HepG2 (cell line): ENCODE measurements at regions of chr1 and their contacts with region 1.

Region 1: DNA sequence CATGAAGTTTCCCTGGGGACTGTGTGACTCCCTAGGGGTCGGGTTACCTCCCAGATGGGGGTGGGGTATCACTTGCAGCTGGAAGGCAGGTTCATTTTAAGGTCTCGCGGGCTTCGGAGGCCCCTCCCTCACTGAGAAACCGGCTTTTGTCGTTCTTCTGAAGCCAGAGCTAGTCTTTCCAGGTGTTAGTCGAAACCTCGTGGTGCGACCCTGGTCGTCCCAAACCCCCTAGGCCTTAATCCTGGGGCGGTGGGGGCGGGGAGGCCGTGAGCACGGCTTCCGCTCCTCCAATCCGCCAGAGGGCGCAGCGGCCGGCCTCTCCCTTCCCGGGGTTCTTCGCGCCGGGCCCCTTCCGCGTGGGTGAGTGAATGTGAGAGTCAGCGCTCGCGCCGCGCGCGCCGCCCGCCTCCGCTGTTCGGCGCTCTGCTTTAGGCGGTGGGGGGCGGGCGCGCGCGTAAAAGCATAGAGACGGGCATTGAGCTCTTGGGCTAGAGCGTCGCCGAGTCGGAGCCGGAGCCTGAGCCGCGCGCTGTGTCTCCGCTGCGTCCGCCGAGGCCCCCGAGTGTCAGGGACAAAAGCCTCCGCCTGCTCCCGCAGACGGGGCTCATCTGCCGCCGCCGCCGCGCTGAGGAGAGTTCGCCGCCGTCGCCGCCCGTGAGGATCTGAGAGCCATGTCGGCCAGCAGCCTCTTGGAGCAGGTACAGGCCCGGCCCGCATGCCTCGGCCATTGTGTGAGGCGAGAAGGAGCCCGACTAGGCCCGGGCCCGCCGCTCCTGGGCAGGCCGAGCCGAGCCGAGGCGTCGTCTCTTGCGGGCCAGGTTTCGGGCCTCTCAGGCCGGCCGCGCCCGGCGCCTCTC is at the start of gene YTHDF2:
- DNase-seq: peak; percentile 96
- ATAC-seq: peak; percentile 88
- H3K4me3 ChIP-seq: peak within 1 kb of the TSS; percentile 75 to 95 (median 89)
- H3K27ac ChIP-seq: peak within 1 kb of the TSS; percentile 97
- H3K4me1 ChIP-seq: peaks cover 66% of the 10 kb centered on the region
- H3K27me3 ChIP-seq: no peaks in the 10 kb centered on the region; a peak in 1 of 5 replicates
- CTCF ChIP-seq: peak; percentile 95
- EP300 ChIP-seq: peak; percentile 31 to 36; a peak in 2 of 4 replicates
- POLR2A ChIP-seq: peak; percentile 57 to 78
- RAD21 ChIP-seq: peak; percentile 69
- total RNA-seq, gene YTHDF2: 59.6 and 84.7 TPM in 2 replicates

Region 2: GRCh38 chr1:28668191-28668955 is 68.3 kb before region 1 on chr1 and contains the start of gene GMEB1:
- CTCF ChIA-PET with region 1: no interaction called
- POLR2A ChIA-PET with region 1: interaction called, 40 read pairs
- in situ Hi-C with region 1: no loop called
- intact Hi-C with region 1: loop called (anchors 5 kb)
- DNase-seq: peak; percentile 73
- ATAC-seq: peak; percentile 80
- H3K4me3 ChIP-seq: peak within 1 kb of the TSS; percentile 81 to 97 (median 92)
- H3K27ac ChIP-seq: peak within 1 kb of the TSS; percentile 97
- H3K4me1 ChIP-seq: peaks cover 39% of the 10 kb centered on the region
- H3K27me3 ChIP-seq: peaks cover 0 to 4% of the 10 kb centered on the region in 2 experiments; a peak in 2 of 5 replicates
- CTCF ChIP-seq: no peak
- EP300 ChIP-seq: no peak
- POLR2A ChIP-seq: peak in 1 of 2 experiments; percentile 39; a peak in 2 of 4 replicates
- RAD21 ChIP-seq: no peak
- total RNA-seq, gene GMEB1: 6.0 and 7.4 TPM in 2 replicates

Region 3: GRCh38 chr1:28751315-28752060 is 14.8 kb after region 1 on chr1:
- CTCF ChIA-PET with region 1: no interaction called
- POLR2A ChIA-PET with region 1: interaction called, 19 read pairs
- in situ Hi-C with region 1: no loop called
- intact Hi-C with region 1: no loop called
- DNase-seq: no peak
- ATAC-seq: no peak
- H3K4me3 ChIP-seq: no peak overlapping the region
- H3K27ac ChIP-seq: no peak overlapping the region
- H3K4me1 ChIP-seq: peaks cover 98% of the 10 kb centered on the region
- H3K27me3 ChIP-seq: no peaks in the 10 kb centered on the region
- CTCF ChIP-seq: no peak
- EP300 ChIP-seq: no peak
- POLR2A ChIP-seq: no peak
- RAD21 ChIP-seq: no peak

Region 4: DNA sequence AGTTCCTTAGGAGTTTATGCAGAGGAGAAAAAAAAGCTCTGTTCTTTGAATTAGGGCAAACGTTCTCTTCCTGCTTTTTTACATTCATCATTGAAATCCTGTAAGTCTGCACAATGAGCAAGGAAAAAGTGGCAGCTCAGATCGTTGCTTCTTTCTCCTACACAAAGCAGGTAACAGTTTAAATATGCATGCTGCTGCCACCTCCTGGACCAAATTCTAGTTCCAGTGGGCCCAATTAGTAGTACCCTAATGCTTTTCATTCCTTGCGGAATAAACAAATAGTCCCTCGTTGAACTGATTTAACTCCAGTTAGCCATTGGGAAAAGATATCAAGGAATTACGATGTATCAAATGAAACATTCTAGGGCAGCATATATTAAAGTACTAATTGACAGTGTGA is 20.2 kb after region 1 on chr1:
- CTCF ChIA-PET with region 1: no interaction called
- POLR2A ChIA-PET with region 1: interaction called, 11 read pairs
- in situ Hi-C with region 1: no loop called
- intact Hi-C with region 1: no loop called
- DNase-seq: no peak
- ATAC-seq: peak; percentile 47; the same call in 2 of the 3 replicates
- H3K4me3 ChIP-seq: no peak overlapping the region
- H3K27ac ChIP-seq: no peak overlapping the region
- H3K4me1 ChIP-seq: peaks cover 50% of the 10 kb centered on the region
- H3K27me3 ChIP-seq: no peaks in the 10 kb centered on the region
- CTCF ChIP-seq: peak; percentile 38; the same call in 1 of the 2 replicates
- EP300 ChIP-seq: no peak
- POLR2A ChIP-seq: no peak
- RAD21 ChIP-seq: no peak